Heart left ventricle (tissue), 16 donors: ENCODE measurements at regions of chr14 and their contacts with region 1.

Region 1: GRCh38 chr14:56686416-56686815 is 106.8 kb downstream of the TMEM260 start:
- DNase-seq: peak; percentile 21 to 70 (median 58)
- ATAC-seq: peak; percentile 58 to 94 (median 90)
- H3K4me3 ChIP-seq: no peak overlapping the region
- H3K27ac ChIP-seq: no peak overlapping the region
- H3K4me1 ChIP-seq: no peaks in the 10 kb centered on the region
- H3K27me3 ChIP-seq: no peaks in the 10 kb centered on the region
- CTCF ChIP-seq: peak in 7 of 12 donors; percentile 8 to 39 (median 22)
- POLR2A ChIP-seq: no peak

Region 2: GRCh38 chr14:57209561-57209960 is 523.1 kb after region 1 on chr14:
- intact Hi-C with region 1: loop called in 1 of 10 experiments (anchors 5 kb)
- DNase-seq: no peak
- ATAC-seq: no peak
- H3K4me3 ChIP-seq: no peak overlapping the region
- H3K27ac ChIP-seq: no peak overlapping the region
- H3K4me1 ChIP-seq: no peaks in the 10 kb centered on the region
- H3K27me3 ChIP-seq: no peaks in the 10 kb centered on the region
- CTCF ChIP-seq: no peak
- POLR2A ChIP-seq: no peak

Region 3: DNA sequence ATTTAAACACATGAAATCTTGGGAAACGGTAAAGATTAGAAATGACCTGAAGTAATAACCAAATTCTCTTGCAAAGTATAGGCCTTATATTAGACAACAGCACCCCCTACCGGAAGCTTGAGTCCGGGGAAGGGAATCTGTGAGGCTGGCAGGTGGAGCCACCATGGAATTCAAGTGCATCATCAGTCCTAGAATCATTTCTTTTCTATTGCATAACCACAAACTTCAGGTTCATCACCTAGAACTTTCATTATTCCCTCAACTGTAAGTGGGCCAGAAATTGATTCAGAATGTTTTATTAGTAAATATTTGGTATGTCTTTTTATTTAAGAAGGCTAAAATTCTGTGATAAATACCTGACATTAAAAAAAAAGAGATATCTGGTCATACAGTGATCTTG is 630.9 kb after region 1 on chr14:
- intact Hi-C with region 1: loop called in 1 of 10 experiments (anchors 10 kb)
- DNase-seq: peak; percentile 45 to 59 (median 54)
- ATAC-seq: peak in 2 of 4 donors; percentile 60 to 62
- H3K4me3 ChIP-seq: no peak overlapping the region
- H3K27ac ChIP-seq: no peak overlapping the region
- H3K4me1 ChIP-seq: no peaks in the 10 kb centered on the region
- H3K27me3 ChIP-seq: peaks cover 0 to 19% (median 0%) of the 10 kb centered on the region in 9 donors
- CTCF ChIP-seq: peak; percentile 71 to 91 (median 84)
- POLR2A ChIP-seq: no peak